ENCODE measurements at regions of chr10 and their contacts with region 1.

Region 1: GRCh38 chr10:60208676-60209269 is 180.9 kb downstream of the ANK3 start:
- DNase-seq: no peak
- ATAC-seq: peak; percentile 40
- H3K4me3 Mint-ChIP-seq: no peak overlapping the region
- H3K27ac Mint-ChIP-seq: no peak overlapping the region
- H3K4me1 Mint-ChIP-seq: peaks cover 33% of the 10 kb centered on the region
- H3K27me3 Mint-ChIP-seq: no peaks in the 10 kb centered on the region
- CTCF ChIP-seq: no peak

Region 2: GRCh38 chr10:59625721-59626522 is 582.9 kb before region 1 on chr10:
- CTCF ChIA-PET with region 1: interaction called, 22 read pairs
- POLR2A ChIA-PET with region 1: no interaction called
- intact Hi-C with region 1: loop called (anchors 1 kb)
- DNase-seq: no peak
- ATAC-seq: peak; percentile 85
- H3K4me3 Mint-ChIP-seq: no peak overlapping the region
- H3K27ac Mint-ChIP-seq: no peak overlapping the region
- H3K4me1 Mint-ChIP-seq: peaks cover 3% of the 10 kb centered on the region
- H3K27me3 Mint-ChIP-seq: no peaks in the 10 kb centered on the region
- CTCF ChIP-seq: peak; percentile 42

Region 3: GRCh38 chr10:59865101-59865500 is 343.7 kb before region 1 on chr10:
- CTCF ChIA-PET with region 1: interaction called, 13 read pairs
- POLR2A ChIA-PET with region 1: no interaction called
- intact Hi-C with region 1: loop called (anchors 1 kb)
- DNase-seq: no peak
- ATAC-seq: peak; percentile 76
- H3K4me3 Mint-ChIP-seq: no peak overlapping the region
- H3K27ac Mint-ChIP-seq: peak overlapping the region; percentile 82
- H3K4me1 Mint-ChIP-seq: peaks cover 69% of the 10 kb centered on the region
- H3K27me3 Mint-ChIP-seq: no peaks in the 10 kb centered on the region
- CTCF ChIP-seq: no peak

Region 4: DNA sequence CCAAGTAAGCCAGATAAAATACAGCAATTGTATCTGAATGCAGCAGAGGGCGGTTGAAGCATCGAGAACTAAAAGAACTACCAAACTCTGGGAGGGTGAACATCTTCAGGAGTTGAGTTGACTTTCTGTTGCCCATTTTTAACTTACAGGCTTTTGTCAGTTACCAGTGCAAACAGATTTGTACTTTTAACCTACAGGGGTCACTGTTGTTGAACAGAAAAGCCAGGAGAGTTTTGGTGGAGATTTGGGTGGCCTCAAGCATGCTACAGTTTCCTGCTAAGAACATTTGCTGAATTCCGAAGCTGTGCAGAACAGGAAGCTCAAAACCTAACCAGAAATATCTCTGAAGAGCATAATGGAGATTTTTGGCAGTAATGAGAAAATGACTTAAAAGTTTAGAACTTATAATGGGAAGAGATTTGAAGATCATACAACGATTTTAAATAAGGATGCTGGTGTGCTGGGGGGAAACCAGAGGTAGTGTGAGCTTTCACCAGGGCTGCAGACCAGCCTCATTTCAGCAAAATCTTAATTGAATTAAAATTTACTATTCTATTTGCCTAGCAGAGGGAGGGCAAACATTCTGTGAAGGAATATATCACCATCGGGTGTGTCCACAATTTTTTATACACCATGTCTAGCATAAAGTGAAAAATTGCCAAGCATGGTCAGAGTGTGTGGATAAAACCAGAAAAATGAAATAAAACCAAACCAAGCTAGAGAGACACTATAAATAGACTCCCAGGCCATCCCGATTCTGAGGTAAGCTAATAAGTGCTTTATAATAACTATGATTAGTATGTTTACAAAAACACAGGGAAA is 93.8 kb before region 1 on chr10:
- CTCF ChIA-PET with region 1: interaction called, 16 read pairs
- POLR2A ChIA-PET with region 1: no interaction called
- intact Hi-C with region 1: loop called (anchors 1 kb)
- DNase-seq: no peak
- ATAC-seq: peak; percentile 64
- H3K4me3 Mint-ChIP-seq: no peak overlapping the region
- H3K27ac Mint-ChIP-seq: no peak overlapping the region
- H3K4me1 Mint-ChIP-seq: no peaks in the 10 kb centered on the region
- H3K27me3 Mint-ChIP-seq: no peaks in the 10 kb centered on the region
- CTCF ChIP-seq: no peak

Region 5: GRCh38 chr10:60434418-60435046 is 225.8 kb after region 1 on chr10:
- CTCF ChIA-PET with region 1: interaction called, 34 read pairs
- POLR2A ChIA-PET with region 1: no interaction called
- intact Hi-C with region 1: loop called (anchors 1 kb)
- DNase-seq: no peak
- ATAC-seq: no peak
- H3K4me3 Mint-ChIP-seq: no peak overlapping the region
- H3K27ac Mint-ChIP-seq: no peak overlapping the region
- H3K4me1 Mint-ChIP-seq: peaks cover 5% of the 10 kb centered on the region
- H3K27me3 Mint-ChIP-seq: no peaks in the 10 kb centered on the region
- CTCF ChIP-seq: peak; percentile 49

Region 6: GRCh38 chr10:60646966-60647796 is 438.4 kb after region 1 on chr10:
- CTCF ChIA-PET with region 1: interaction called, 12 read pairs
- POLR2A ChIA-PET with region 1: no interaction called
- intact Hi-C with region 1: loop called (anchors 1 kb)
- DNase-seq: no peak
- ATAC-seq: peak; percentile 42
- H3K4me3 Mint-ChIP-seq: no peak overlapping the region
- H3K27ac Mint-ChIP-seq: no peak overlapping the region
- H3K4me1 Mint-ChIP-seq: peaks cover 1% of the 10 kb centered on the region
- H3K27me3 Mint-ChIP-seq: no peaks in the 10 kb centered on the region
- CTCF ChIP-seq: peak; percentile 79

Measured in activated B cell treated with CpG ODN at 0.5 μM for 24 hours (primary cell).